HepG2 (cell line): ENCODE measurements at regions of chr18 and their contacts with region 1.

Region 1: GRCh38 chr18:62425465-62426195 is 97.2 kb upstream of the ZCCHC2 start:
- DNase-seq: peak; percentile 88
- ATAC-seq: peak; percentile 81
- H3K4me3 ChIP-seq: peak overlapping the region; percentile 42 to 68 (median 62)
- H3K27ac ChIP-seq: peak overlapping the region; percentile 61
- H3K4me1 ChIP-seq: peaks cover 67% of the 10 kb centered on the region
- H3K27me3 ChIP-seq: no peaks in the 10 kb centered on the region
- CTCF ChIP-seq: peak; percentile 91
- EP300 ChIP-seq: no peak
- POLR2A ChIP-seq: no peak
- RAD21 ChIP-seq: peak; percentile 88

Region 2: GRCh38 chr18:61272793-61273192 is 1152.8 kb before region 1 on chr18:
- CTCF ChIA-PET with region 1: no interaction called
- POLR2A ChIA-PET with region 1: no interaction called
- in situ Hi-C with region 1: no loop called
- intact Hi-C with region 1: no loop called
- DNase-seq: no peak
- ATAC-seq: no peak
- H3K4me3 ChIP-seq: no peak overlapping the region
- H3K27ac ChIP-seq: no peak overlapping the region
- H3K4me1 ChIP-seq: no peaks in the 10 kb centered on the region
- H3K27me3 ChIP-seq: no peaks in the 10 kb centered on the region
- CTCF ChIP-seq: no peak
- EP300 ChIP-seq: no peak
- POLR2A ChIP-seq: no peak
- RAD21 ChIP-seq: no peak

Region 3: GRCh38 chr18:62165583-62165982 is 260.0 kb before region 1 on chr18:
- CTCF ChIA-PET with region 1: no interaction called
- POLR2A ChIA-PET with region 1: no interaction called
- in situ Hi-C with region 1: no loop called
- intact Hi-C with region 1: no loop called
- DNase-seq: no peak
- ATAC-seq: no peak
- H3K4me3 ChIP-seq: no peak overlapping the region
- H3K27ac ChIP-seq: no peak overlapping the region
- H3K4me1 ChIP-seq: no peaks in the 10 kb centered on the region
- H3K27me3 ChIP-seq: no peaks in the 10 kb centered on the region
- CTCF ChIP-seq: no peak
- EP300 ChIP-seq: no peak
- POLR2A ChIP-seq: no peak
- RAD21 ChIP-seq: no peak

Region 4: GRCh38 chr18:62379051-62379450 is 46.6 kb before region 1 on chr18:
- CTCF ChIA-PET with region 1: no interaction called
- POLR2A ChIA-PET with region 1: no interaction called
- in situ Hi-C with region 1: no loop called
- intact Hi-C with region 1: no loop called
- DNase-seq: no peak
- ATAC-seq: no peak
- H3K4me3 ChIP-seq: no peak overlapping the region
- H3K27ac ChIP-seq: no peak overlapping the region
- H3K4me1 ChIP-seq: peaks cover 7% of the 10 kb centered on the region
- H3K27me3 ChIP-seq: no peaks in the 10 kb centered on the region; a peak in 1 of 5 replicates
- CTCF ChIP-seq: no peak
- EP300 ChIP-seq: no peak
- POLR2A ChIP-seq: no peak
- RAD21 ChIP-seq: no peak

Region 5: GRCh38 chr18:62399781-62400308 is 25.8 kb before region 1 on chr18:
- CTCF ChIA-PET with region 1: no interaction called
- POLR2A ChIA-PET with region 1: interaction called, 19 read pairs
- in situ Hi-C with region 1: no loop called
- intact Hi-C with region 1: no loop called
- DNase-seq: peak; percentile 79
- ATAC-seq: peak; percentile 95
- H3K4me3 ChIP-seq: peak overlapping the region in 1 of 3 experiments; percentile 34; a peak in 2 of 6 replicates
- H3K27ac ChIP-seq: no peak overlapping the region
- H3K4me1 ChIP-seq: peaks cover 47% of the 10 kb centered on the region
- H3K27me3 ChIP-seq: no peaks in the 10 kb centered on the region
- CTCF ChIP-seq: peak; percentile 75
- EP300 ChIP-seq: peak in 1 of 2 experiments; percentile 52; a peak in 1 of 4 replicates
- POLR2A ChIP-seq: no peak
- RAD21 ChIP-seq: no peak; the same call in 1 of the 2 replicates

Region 6: DNA sequence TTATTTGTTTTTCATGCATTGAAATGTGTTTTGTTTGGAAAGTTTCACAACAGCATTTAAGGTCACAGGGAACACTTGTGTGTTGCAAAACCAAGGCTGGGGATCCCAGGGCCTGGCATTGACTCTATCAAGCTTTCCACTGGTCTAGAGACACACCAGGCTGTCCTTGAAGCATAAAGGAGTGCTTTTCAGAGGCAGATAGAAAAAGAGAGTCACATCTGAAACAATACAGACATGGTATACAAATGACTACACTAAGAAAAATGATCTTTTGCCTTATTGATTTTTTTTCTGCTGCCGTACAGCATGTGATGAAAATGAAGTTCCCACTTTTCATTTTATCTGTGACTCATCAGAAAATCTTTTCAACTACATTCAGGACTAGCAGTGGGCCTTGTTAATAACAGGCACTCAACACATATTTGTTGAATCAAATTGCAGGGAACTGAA is 35.2 kb after region 1 on chr18:
- CTCF ChIA-PET with region 1: interaction called, 3 read pairs
- POLR2A ChIA-PET with region 1: interaction called, 8 read pairs
- in situ Hi-C with region 1: no loop called
- intact Hi-C with region 1: loop called (anchors 1 kb)
- DNase-seq: peak; percentile 99
- ATAC-seq: peak; percentile 96
- H3K4me3 ChIP-seq: peak overlapping the region in 2 of 3 experiments; percentile 44 to 45; a peak in 4 of 6 replicates
- H3K27ac ChIP-seq: peak overlapping the region; percentile 95
- H3K4me1 ChIP-seq: peaks cover 69% of the 10 kb centered on the region
- H3K27me3 ChIP-seq: no peaks in the 10 kb centered on the region
- CTCF ChIP-seq: no peak
- EP300 ChIP-seq: peak; percentile 93 to 96
- POLR2A ChIP-seq: peak in 1 of 2 experiments; percentile 42; a peak in 1 of 4 replicates
- RAD21 ChIP-seq: peak; percentile 56; the same call in 1 of the 2 replicates

Region 7: GRCh38 chr18:62486304-62486964 is 60.8 kb after region 1 on chr18:
- CTCF ChIA-PET with region 1: no interaction called
- POLR2A ChIA-PET with region 1: no interaction called
- in situ Hi-C with region 1: no loop called
- intact Hi-C with region 1: no loop called
- DNase-seq: peak; percentile 69
- ATAC-seq: peak; percentile 90
- H3K4me3 ChIP-seq: peak overlapping the region in 1 of 3 experiments; percentile 26; a peak in 1 of 6 replicates
- H3K27ac ChIP-seq: no peak overlapping the region
- H3K4me1 ChIP-seq: peaks cover 29% of the 10 kb centered on the region
- H3K27me3 ChIP-seq: no peaks in the 10 kb centered on the region
- CTCF ChIP-seq: no peak
- EP300 ChIP-seq: peak in 1 of 2 experiments; percentile 56; a peak in 1 of 4 replicates
- POLR2A ChIP-seq: no peak
- RAD21 ChIP-seq: no peak